HepG2 (cell line): ENCODE measurements at regions of chr20 and their contacts with region 1.

Region 1: GRCh38 chr20:16801919-16802911 is 54.1 kb downstream of the OTOR start:
- DNase-seq: peak; percentile 66
- ATAC-seq: peak; percentile 77
- H3K4me3 ChIP-seq: no peak overlapping the region
- H3K27ac ChIP-seq: no peak overlapping the region
- H3K4me1 ChIP-seq: no peaks in the 10 kb centered on the region
- H3K27me3 ChIP-seq: peaks cover 1 to 27% of the 10 kb centered on the region in 2 experiments; a peak in 2 of 5 replicates
- CTCF ChIP-seq: peak; percentile 87
- EP300 ChIP-seq: no peak
- POLR2A ChIP-seq: no peak
- RAD21 ChIP-seq: peak; percentile 47; the same call in 1 of the 2 replicates

Region 2: GRCh38 chr20:16821211-16822089 is 19.2 kb after region 1 on chr20:
- CTCF ChIA-PET with region 1: interaction called, 25 read pairs
- POLR2A ChIA-PET with region 1: no interaction called
- in situ Hi-C with region 1: no loop called
- intact Hi-C with region 1: loop called (anchors 1 kb)
- DNase-seq: peak; percentile 46
- ATAC-seq: peak; percentile 88
- H3K4me3 ChIP-seq: no peak overlapping the region
- H3K27ac ChIP-seq: no peak overlapping the region
- H3K4me1 ChIP-seq: no peaks in the 10 kb centered on the region
- H3K27me3 ChIP-seq: no peaks in the 10 kb centered on the region
- CTCF ChIP-seq: peak; percentile 87
- EP300 ChIP-seq: no peak
- POLR2A ChIP-seq: no peak
- RAD21 ChIP-seq: peak; percentile 63

Region 3: DNA sequence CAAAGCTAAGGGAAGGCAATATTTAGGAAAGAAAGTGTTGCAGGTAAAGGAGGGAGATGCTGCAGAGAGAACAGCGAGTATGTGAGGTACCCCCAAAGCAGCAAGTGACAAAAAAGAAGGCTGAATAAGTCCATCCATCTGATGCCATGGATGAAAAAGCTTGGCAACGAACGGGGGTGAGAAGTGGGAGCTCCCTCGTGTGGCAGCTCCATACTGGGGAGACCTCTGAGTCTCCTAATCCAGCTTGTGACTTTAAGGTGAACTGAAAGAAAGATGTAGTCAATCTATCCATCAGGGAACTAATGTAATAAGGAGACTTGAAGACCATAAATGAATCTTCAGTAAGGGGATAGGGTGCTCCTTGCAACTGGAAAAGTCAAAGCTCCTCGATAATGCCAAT is 102.5 kb after region 1 on chr20:
- CTCF ChIA-PET with region 1: no interaction called
- POLR2A ChIA-PET with region 1: no interaction called
- in situ Hi-C with region 1: no loop called
- intact Hi-C with region 1: loop called (anchors 1 kb)
- DNase-seq: no peak
- ATAC-seq: peak; percentile 74
- H3K4me3 ChIP-seq: no peak overlapping the region
- H3K27ac ChIP-seq: no peak overlapping the region
- H3K4me1 ChIP-seq: no peaks in the 10 kb centered on the region
- H3K27me3 ChIP-seq: no peaks in the 10 kb centered on the region
- CTCF ChIP-seq: peak; percentile 36
- EP300 ChIP-seq: no peak
- POLR2A ChIP-seq: no peak
- RAD21 ChIP-seq: no peak

Region 4: DNA sequence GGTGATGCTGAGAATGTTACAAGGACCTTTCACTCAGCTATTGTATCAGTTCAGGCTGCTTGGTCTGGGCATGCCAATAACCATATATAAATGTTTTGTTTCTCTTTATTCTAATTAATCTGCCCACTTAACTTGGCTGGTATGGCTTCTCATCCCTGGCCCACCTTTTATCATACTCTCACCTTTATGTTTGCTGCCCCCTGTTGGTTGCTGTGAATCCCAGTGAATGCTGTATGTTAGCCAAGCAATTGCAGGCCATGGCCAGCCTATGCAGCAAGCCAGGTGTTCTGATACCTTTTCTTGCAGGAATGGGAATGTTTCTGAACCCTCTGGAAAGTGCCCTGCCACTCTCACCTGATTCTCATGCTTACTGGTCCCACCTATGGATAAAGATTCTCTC is 479.3 kb after region 1 on chr20:
- CTCF ChIA-PET with region 1: interaction called, 11 read pairs
- POLR2A ChIA-PET with region 1: no interaction called
- in situ Hi-C with region 1: loop called (anchors 5 kb)
- intact Hi-C with region 1: loop called (anchors 1 kb)
- DNase-seq: peak; percentile 64
- ATAC-seq: peak; percentile 93
- H3K4me3 ChIP-seq: no peak overlapping the region
- H3K27ac ChIP-seq: no peak overlapping the region
- H3K4me1 ChIP-seq: no peaks in the 10 kb centered on the region
- H3K27me3 ChIP-seq: no peaks in the 10 kb centered on the region
- CTCF ChIP-seq: peak; percentile 73
- EP300 ChIP-seq: no peak
- POLR2A ChIP-seq: no peak
- RAD21 ChIP-seq: no peak

Region 5: GRCh38 chr20:17431621-17432364 is 629.6 kb after region 1 on chr20:
- CTCF ChIA-PET with region 1: interaction called, 98 read pairs
- POLR2A ChIA-PET with region 1: interaction called, 4 read pairs
- in situ Hi-C with region 1: loop called (anchors 5 kb)
- intact Hi-C with region 1: loop called (anchors 1 kb)
- DNase-seq: peak; percentile 57
- ATAC-seq: peak; percentile 83
- H3K4me3 ChIP-seq: no peak overlapping the region
- H3K27ac ChIP-seq: no peak overlapping the region
- H3K4me1 ChIP-seq: no peaks in the 10 kb centered on the region
- H3K27me3 ChIP-seq: peaks cover 7 to 46% of the 10 kb centered on the region in 2 experiments; a peak in 2 of 5 replicates
- CTCF ChIP-seq: peak; percentile 87
- EP300 ChIP-seq: no peak
- POLR2A ChIP-seq: no peak
- RAD21 ChIP-seq: peak; percentile 68; the same call in 1 of the 2 replicates